Naive thymus-derived CD4-positive, alpha-beta T cell (primary cell): ENCODE measurements at regions of chr3 and their contacts with region 1.

Region 1: DNA sequence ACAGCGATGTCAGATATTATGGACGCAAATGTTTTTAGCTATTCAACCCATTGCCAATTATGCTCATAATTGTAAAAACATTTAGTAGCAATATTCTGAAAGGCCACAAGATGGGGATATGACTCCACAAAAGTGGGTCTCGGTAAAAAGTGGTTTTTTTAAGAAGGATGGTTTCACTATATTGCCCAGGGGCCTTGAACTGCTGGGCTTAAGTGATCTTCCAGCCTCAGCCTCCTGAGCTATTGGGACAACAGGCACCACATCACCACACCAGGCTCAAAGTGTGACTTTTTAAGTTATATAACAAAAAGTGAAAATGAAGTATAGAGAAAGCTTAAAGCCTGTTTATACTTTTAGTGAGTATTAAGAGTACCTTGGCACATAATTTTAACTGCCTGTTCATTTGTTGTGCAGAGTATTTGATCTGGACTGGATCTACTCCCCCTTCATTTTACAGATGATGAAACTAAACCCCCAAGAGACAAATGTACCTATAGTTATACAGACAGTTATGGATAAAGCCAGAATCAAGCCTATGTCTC is 9.4 kb downstream of the NAA50 start:
- DNase-seq: peak in 7 of 9 donors; percentile 49 to 71 (median 67)
- ATAC-seq: peak; percentile 93
- H3K4me3 ChIP-seq: no peak overlapping the region
- H3K4me3 Mint-ChIP-seq: no peak overlapping the region
- H3K27ac ChIP-seq: peak overlapping the region; percentile 17
- H3K27ac Mint-ChIP-seq: peak overlapping the region; percentile 18 to 85 (median 60)
- H3K4me1 ChIP-seq: peaks cover 6 to 23% of the 10 kb centered on the region in 2 donors
- H3K4me1 Mint-ChIP-seq: peaks cover 13 to 70% (median 56%) of the 10 kb centered on the region in 7 donors
- H3K27me3 ChIP-seq: no peaks in the 10 kb centered on the region
- H3K27me3 Mint-ChIP-seq: no peaks in the 10 kb centered on the region

Region 2: DNA sequence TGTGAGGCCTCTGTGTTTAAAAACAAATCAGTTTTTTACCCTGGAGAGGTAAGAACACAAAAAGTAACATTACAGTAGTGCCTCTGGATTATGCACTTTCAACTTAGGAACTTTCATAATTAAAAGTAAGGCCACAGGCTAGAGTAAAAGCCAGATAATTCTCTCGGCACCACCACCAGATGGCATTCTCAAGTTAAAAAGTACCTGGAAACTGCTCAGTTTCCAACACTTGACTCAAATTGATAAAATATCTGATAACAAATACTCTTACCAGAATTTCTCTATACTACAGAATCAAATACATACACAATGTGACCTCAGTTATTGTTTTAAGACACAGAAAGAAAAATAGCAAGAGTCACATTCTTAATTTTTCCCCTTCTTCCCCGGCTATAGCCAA is 241.6 kb before region 1 on chr3:
- CTCF ChIA-PET with region 1: no interaction called
- POLR2A ChIA-PET with region 1: no interaction called
- intact Hi-C with region 1: loop called in 1 of 2 experiments (anchors 2 kb)
- DNase-seq: peak in 6 of 9 donors; percentile 22 to 62 (median 42)
- ATAC-seq: peak; percentile 67
- H3K4me3 ChIP-seq: no peak overlapping the region
- H3K4me3 Mint-ChIP-seq: no peak overlapping the region
- H3K27ac ChIP-seq: no peak overlapping the region
- H3K27ac Mint-ChIP-seq: no peak overlapping the region
- H3K4me1 ChIP-seq: no peaks in the 10 kb centered on the region
- H3K4me1 Mint-ChIP-seq: peaks cover 0 to 10% (median under 1%) of the 10 kb centered on the region in 7 donors
- H3K27me3 ChIP-seq: no peaks in the 10 kb centered on the region
- H3K27me3 Mint-ChIP-seq: no peaks in the 10 kb centered on the region

Region 3: DNA sequence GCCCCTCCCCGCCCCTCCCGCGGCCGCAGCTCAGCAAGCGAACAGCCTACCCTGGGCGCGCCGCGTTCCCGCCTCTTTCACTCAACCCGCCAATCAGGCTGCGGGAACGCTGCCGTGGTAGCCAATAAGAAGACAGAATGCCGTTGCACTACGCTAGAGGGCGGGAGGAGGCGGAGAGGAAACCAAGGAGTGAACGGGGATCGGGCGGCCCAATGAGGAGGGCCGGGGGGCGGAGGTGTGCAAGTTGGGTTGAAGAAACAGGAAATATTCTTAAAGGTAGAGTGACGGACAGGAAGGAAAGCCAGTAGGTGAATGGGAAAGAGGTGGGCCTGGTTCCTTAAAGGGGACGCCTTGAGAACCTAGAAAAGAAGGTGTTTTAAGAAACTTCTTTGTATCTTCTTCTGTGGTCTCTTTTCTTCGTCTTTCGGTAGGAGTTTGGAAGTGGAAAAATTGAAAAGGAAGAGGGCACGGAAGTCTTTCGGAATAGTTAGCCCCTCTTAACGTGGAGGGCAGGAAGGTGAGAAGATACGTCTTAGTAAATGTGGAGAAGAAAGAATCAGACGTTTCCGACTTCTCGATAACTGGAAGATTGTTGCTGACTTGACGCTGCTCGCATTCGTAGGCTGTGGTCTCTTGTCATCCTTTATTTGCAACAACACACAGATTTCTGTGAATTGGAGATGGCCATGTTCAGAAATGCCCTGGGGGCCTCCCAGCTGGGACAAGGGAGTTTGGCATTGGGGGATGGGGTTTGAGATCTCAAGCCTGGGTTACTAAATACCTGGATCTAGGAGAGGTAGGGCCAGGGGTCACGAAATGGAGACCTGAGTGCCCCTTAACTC is 39.7 kb before region 1 on chr3:
- CTCF ChIA-PET with region 1: interaction called, 5 read pairs
- POLR2A ChIA-PET with region 1: interaction called, 5 read pairs
- intact Hi-C with region 1: loop called in 1 of 2 experiments (anchors 2 kb)
- DNase-seq: peak; percentile 96 to 100 (median 99)
- ATAC-seq: peak; percentile 93
- H3K4me3 ChIP-seq: peak overlapping the region; percentile 82
- H3K4me3 Mint-ChIP-seq: no peak overlapping the region
- H3K27ac ChIP-seq: peak overlapping the region; percentile 99
- H3K27ac Mint-ChIP-seq: no peak overlapping the region
- H3K4me1 ChIP-seq: peaks cover 11 to 27% of the 10 kb centered on the region in 2 donors
- H3K4me1 Mint-ChIP-seq: peaks cover 23 to 36% (median 29%) of the 10 kb centered on the region in 7 donors
- H3K27me3 ChIP-seq: no peaks in the 10 kb centered on the region
- H3K27me3 Mint-ChIP-seq: no peaks in the 10 kb centered on the region

Region 4: GRCh38 chr3:113714702-113715101 is 21.9 kb before region 1 on chr3:
- CTCF ChIA-PET with region 1: no interaction called
- POLR2A ChIA-PET with region 1: no interaction called
- intact Hi-C with region 1: no loop called
- DNase-seq: no peak
- ATAC-seq: no peak
- H3K4me3 ChIP-seq: no peak overlapping the region
- H3K4me3 Mint-ChIP-seq: no peak overlapping the region
- H3K27ac ChIP-seq: no peak overlapping the region
- H3K27ac Mint-ChIP-seq: no peak overlapping the region
- H3K4me1 ChIP-seq: no peaks in the 10 kb centered on the region
- H3K4me1 Mint-ChIP-seq: peaks cover 0 to 4% (median 0%) of the 10 kb centered on the region in 7 donors
- H3K27me3 ChIP-seq: no peaks in the 10 kb centered on the region
- H3K27me3 Mint-ChIP-seq: peaks cover 0 to 18% (median 11%) of the 10 kb centered on the region in 5 donors

Region 5: GRCh38 chr3:113838631-113839209 is 102.1 kb after region 1 on chr3 and contains the start of gene GRAMD1C:
- CTCF ChIA-PET with region 1: interaction called, 6 read pairs
- POLR2A ChIA-PET with region 1: no interaction called
- intact Hi-C with region 1: loop called (anchors 1 kb)
- DNase-seq: peak; percentile 70 to 86 (median 83)
- ATAC-seq: peak; percentile 100
- H3K4me3 ChIP-seq: peak within 1 kb of the TSS; percentile 72
- H3K4me3 Mint-ChIP-seq: peak within 1 kb of the TSS; percentile 72 to 85 (median 80)
- H3K27ac ChIP-seq: no peak within 1 kb of the TSS
- H3K27ac Mint-ChIP-seq: peak within 1 kb of the TSS in 5 of 9 donors; percentile 2 to 41 (median 17)
- H3K4me1 ChIP-seq: no peaks in the 10 kb centered on the region
- H3K4me1 Mint-ChIP-seq: peaks cover 0 to 11% (median 5%) of the 10 kb centered on the region in 7 donors
- H3K27me3 ChIP-seq: no peaks in the 10 kb centered on the region
- H3K27me3 Mint-ChIP-seq: peaks cover 0 to 7% (median 4%) of the 10 kb centered on the region in 5 donors
- total RNA-seq, gene GRAMD1C: 0.22 to 0.54 (median 0.28) TPM in 4 of 5 experiments, not detected in the other

Region 6: GRCh38 chr3:114056130-114057010 is 319.8 kb after region 1 on chr3 and contains the starts of genes CCDC191 and QTRT2:
- CTCF ChIA-PET with region 1: no interaction called
- POLR2A ChIA-PET with region 1: no interaction called
- intact Hi-C with region 1: loop called in 1 of 2 experiments (anchors 2 kb)
- DNase-seq: peak; percentile 82 to 99 (median 98)
- ATAC-seq: peak; percentile 97
- H3K4me3 ChIP-seq: peak within 1 kb of the TSS; percentile 95
- H3K4me3 Mint-ChIP-seq: peak within 1 kb of the TSS; percentile 91 to 100 (median 98)
- H3K27ac ChIP-seq: peak within 1 kb of the TSS; percentile 91
- H3K27ac Mint-ChIP-seq: peak within 1 kb of the TSS; percentile 87 to 99 (median 97)
- H3K4me1 ChIP-seq: peaks cover 10 to 12% of the 10 kb centered on the region in 2 donors
- H3K4me1 Mint-ChIP-seq: peaks cover 24 to 60% (median 55%) of the 10 kb centered on the region in 7 donors
- H3K27me3 ChIP-seq: no peaks in the 10 kb centered on the region
- H3K27me3 Mint-ChIP-seq: peaks cover 0 to 2% (median 0%) of the 10 kb centered on the region in 5 donors
- total RNA-seq, gene CCDC191: 3.9 to 8.8 (median 5.1) TPM
- total RNA-seq, gene QTRT2: 29.9 to 38.8 (median 33.8) TPM

Region 7: DNA sequence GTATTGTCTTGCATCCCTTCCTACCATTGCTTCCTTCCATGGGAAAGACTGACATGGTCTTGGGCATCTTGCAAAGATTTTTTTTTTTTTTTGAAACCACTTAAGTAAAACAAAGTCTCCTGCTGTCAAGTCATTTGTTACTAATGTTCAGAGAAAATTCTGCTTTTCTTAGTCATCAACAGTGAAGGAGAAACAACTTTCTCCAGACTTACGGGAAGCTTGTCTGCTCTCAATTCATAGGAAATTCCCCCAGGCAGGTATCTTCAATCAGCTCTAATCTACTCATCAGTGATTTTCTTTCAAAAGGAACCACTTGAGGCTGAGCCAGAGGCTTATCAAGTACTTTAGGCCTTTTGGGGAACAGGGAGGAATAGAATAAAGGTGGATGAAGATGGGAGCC is 458.1 kb after region 1 on chr3:
- CTCF ChIA-PET with region 1: no interaction called
- POLR2A ChIA-PET with region 1: no interaction called
- intact Hi-C with region 1: no loop called
- DNase-seq: no peak
- ATAC-seq: no peak
- H3K4me3 ChIP-seq: no peak overlapping the region
- H3K4me3 Mint-ChIP-seq: no peak overlapping the region
- H3K27ac ChIP-seq: no peak overlapping the region
- H3K27ac Mint-ChIP-seq: no peak overlapping the region
- H3K4me1 ChIP-seq: no peaks in the 10 kb centered on the region
- H3K4me1 Mint-ChIP-seq: peaks cover 0 to 4% (median 0%) of the 10 kb centered on the region in 7 donors
- H3K27me3 ChIP-seq: no peaks in the 10 kb centered on the region
- H3K27me3 Mint-ChIP-seq: no peaks in the 10 kb centered on the region

Region 8: DNA sequence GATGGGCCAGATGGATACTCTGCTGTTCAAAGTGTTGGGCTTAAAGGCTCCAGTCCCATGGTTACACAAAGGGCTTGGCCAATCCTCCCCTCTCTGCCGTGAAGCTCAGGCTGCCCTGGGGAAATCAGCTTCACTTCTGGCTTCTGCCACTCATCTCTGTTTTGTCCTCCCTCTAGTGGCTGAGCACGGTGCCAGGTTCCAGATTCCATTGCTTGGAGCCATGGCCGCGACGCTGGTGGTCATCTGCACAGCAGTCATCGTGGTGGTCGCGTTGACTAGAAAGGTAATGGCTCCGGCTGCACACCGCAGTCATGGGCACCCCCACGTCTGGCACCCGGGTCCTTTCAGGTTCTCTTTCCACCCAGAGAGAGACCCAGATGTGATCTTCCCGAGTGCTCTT is 562.8 kb after region 1 on chr3:
- CTCF ChIA-PET with region 1: no interaction called
- POLR2A ChIA-PET with region 1: no interaction called
- intact Hi-C with region 1: loop called in 1 of 2 experiments (anchors 1 kb)
- DNase-seq: peak in 5 of 9 donors; percentile 18 to 34 (median 26)
- ATAC-seq: peak; percentile 65
- H3K4me3 ChIP-seq: no peak overlapping the region
- H3K4me3 Mint-ChIP-seq: peak overlapping the region in 2 of 10 donors; percentile 19 to 56
- H3K27ac ChIP-seq: no peak overlapping the region
- H3K27ac Mint-ChIP-seq: peak overlapping the region in 1 of 9 donors; percentile 17
- H3K4me1 ChIP-seq: peaks cover 0 to 11% of the 10 kb centered on the region in 2 donors
- H3K4me1 Mint-ChIP-seq: peaks cover 0 to 21% (median 4%) of the 10 kb centered on the region in 7 donors
- H3K27me3 ChIP-seq: no peaks in the 10 kb centered on the region
- H3K27me3 Mint-ChIP-seq: no peaks in the 10 kb centered on the region

Region 9: DNA sequence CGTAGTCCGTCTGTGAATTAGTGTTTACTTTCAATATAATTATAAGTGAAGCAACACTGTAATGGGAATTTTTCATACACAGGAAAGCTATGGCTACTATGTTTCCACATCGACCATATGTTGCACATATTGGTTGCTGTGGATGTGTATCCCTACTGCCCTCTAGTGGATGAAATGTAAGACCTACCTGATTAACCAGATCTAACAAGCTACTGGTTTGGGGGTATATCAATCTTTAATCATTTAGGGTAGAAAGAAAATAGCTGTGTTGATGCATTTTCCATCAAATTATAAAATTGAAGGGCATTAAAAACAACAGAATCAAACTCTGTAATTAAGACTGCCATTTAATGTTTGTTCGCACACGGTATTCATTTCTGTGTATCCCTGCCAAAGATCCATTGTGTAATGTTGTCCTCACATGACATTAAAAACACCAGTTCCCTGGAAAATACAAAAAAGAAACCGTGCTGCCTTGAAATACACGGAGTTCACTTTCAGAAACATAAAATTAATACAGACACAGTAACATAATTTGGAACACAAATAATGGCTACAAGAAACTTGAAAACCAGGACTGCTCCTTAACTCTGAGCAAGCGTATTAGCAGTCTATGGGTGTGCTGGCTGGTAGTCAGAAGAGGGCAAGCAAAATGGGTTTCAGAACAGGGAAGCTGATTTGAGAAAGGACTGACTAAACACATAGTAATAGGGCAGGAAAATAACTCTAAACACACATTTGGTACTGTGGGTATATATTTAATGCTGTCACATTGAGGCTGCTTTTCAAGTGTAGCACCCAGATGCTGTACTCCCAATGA is 682.3 kb after region 1 on chr3:
- CTCF ChIA-PET with region 1: interaction called, 3 read pairs
- POLR2A ChIA-PET with region 1: no interaction called
- intact Hi-C with region 1: loop called in 1 of 2 experiments (anchors 2 kb)
- DNase-seq: peak in 7 of 9 donors; percentile 40 to 66 (median 57)
- ATAC-seq: peak; percentile 91
- H3K4me3 ChIP-seq: no peak overlapping the region
- H3K4me3 Mint-ChIP-seq: no peak overlapping the region
- H3K27ac ChIP-seq: no peak overlapping the region
- H3K27ac Mint-ChIP-seq: peak overlapping the region in 2 of 9 donors; percentile 26 to 60
- H3K4me1 ChIP-seq: no peaks in the 10 kb centered on the region
- H3K4me1 Mint-ChIP-seq: peaks cover 4 to 18% (median 8%) of the 10 kb centered on the region in 7 donors
- H3K27me3 ChIP-seq: no peaks in the 10 kb centered on the region
- H3K27me3 Mint-ChIP-seq: peaks cover 0 to 2% (median 0%) of the 10 kb centered on the region in 5 donors